HepG2 (cell line): ENCODE measurements at regions of chr7 and their contacts with region 1.

Region 1: DNA sequence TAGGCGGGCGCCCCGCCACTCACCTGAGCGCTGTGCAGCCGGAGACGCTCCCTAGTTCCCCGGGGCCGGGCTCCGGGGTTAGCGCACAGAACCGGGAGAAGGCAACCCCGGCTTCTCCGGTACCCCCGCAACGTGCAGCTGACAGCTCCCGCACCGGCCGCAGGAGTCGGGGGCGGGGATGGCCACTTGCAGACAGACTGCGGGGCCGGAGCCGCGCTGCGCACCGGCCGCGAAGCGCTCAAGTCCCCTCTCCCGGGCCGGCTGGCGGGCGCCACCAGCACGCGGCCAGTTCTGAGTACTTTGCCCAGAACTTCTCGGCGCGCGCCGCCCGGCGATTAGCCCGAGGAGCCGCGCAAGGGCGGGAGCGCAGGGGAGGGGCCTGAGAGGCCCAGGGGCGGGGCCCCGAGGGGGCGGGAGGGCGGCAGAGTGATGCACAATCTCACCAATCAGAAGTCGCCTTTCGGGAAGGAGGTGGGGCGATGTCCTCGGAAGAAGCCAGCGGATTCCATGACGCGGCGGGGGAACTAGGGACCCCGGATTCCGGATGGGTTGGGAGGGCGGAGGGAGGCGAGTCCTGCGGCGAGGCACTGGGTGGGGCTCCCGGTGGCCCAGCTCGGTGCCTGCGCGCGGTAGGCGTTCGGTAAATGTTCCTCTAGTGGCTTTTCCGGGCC is at the start of gene OSBPL3:
- DNase-seq: peak; percentile 91
- ATAC-seq: peak; percentile 84
- H3K4me3 ChIP-seq: peak within 1 kb of the TSS; percentile 78 to 89 (median 87)
- H3K27ac ChIP-seq: peak within 1 kb of the TSS; percentile 94
- H3K4me1 ChIP-seq: peaks cover 82% of the 10 kb centered on the region
- H3K27me3 ChIP-seq: no peaks in the 10 kb centered on the region; a peak in 1 of 5 replicates
- CTCF ChIP-seq: peak; percentile 46
- EP300 ChIP-seq: no peak
- POLR2A ChIP-seq: peak; percentile 72 to 81
- RAD21 ChIP-seq: no peak; the same call in 1 of the 2 replicates
- total RNA-seq, gene OSBPL3: 26.4 and 28.9 TPM in 2 replicates

Region 2: DNA sequence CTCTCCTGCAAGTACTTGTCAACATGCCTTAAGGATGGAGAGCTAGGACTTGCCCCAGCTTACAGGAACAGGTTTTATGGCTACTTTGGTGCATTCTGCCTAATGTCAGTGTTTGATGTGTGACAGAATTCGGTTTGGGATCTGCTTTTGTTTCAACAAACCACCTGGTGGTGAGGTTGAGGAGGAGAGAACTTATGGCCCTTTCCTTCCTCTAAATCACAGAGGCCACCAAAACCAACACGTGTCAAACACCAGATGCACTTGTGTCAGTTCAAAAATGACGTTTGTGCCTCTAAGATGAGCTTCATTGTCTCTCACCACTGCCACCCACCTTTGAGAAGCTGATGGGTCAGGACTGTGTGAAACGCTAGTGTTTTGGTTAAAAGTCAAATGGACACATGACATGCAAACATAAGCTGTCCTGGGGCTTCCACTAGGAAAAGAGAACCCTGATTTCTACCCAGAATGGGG is 83.9 kb before region 1 on chr7:
- CTCF ChIA-PET with region 1: interaction called, 8 read pairs
- POLR2A ChIA-PET with region 1: interaction called, 4 read pairs
- in situ Hi-C with region 1: no loop called
- intact Hi-C with region 1: loop called (anchors 2 kb)
- DNase-seq: no peak
- ATAC-seq: no peak
- H3K4me3 ChIP-seq: no peak overlapping the region
- H3K27ac ChIP-seq: no peak overlapping the region
- H3K4me1 ChIP-seq: peaks cover 8% of the 10 kb centered on the region
- H3K27me3 ChIP-seq: no peaks in the 10 kb centered on the region
- CTCF ChIP-seq: no peak
- EP300 ChIP-seq: no peak
- POLR2A ChIP-seq: no peak
- RAD21 ChIP-seq: no peak

Region 3: GRCh38 chr7:25028370-25029021 is 48.5 kb after region 1 on chr7:
- CTCF ChIA-PET with region 1: no interaction called
- POLR2A ChIA-PET with region 1: interaction called, 5 read pairs
- in situ Hi-C with region 1: no loop called
- intact Hi-C with region 1: loop called (anchors 2 kb)
- DNase-seq: peak; percentile 76
- ATAC-seq: no peak
- H3K4me3 ChIP-seq: no peak overlapping the region; a peak in 1 of 6 replicates
- H3K27ac ChIP-seq: peak overlapping the region; percentile 14
- H3K4me1 ChIP-seq: peaks cover 86% of the 10 kb centered on the region
- H3K27me3 ChIP-seq: no peaks in the 10 kb centered on the region
- CTCF ChIP-seq: no peak
- EP300 ChIP-seq: peak in 1 of 2 experiments; percentile 46; a peak in 1 of 4 replicates
- POLR2A ChIP-seq: no peak
- RAD21 ChIP-seq: no peak

Region 4: GRCh38 chr7:25134358-25135010 is 154.5 kb after region 1 on chr7:
- CTCF ChIA-PET with region 1: no interaction called
- POLR2A ChIA-PET with region 1: no interaction called
- in situ Hi-C with region 1: no loop called
- intact Hi-C with region 1: no loop called
- DNase-seq: no peak
- ATAC-seq: no peak
- H3K4me3 ChIP-seq: no peak overlapping the region
- H3K27ac ChIP-seq: no peak overlapping the region
- H3K4me1 ChIP-seq: peaks cover 28% of the 10 kb centered on the region
- H3K27me3 ChIP-seq: no peaks in the 10 kb centered on the region
- CTCF ChIP-seq: no peak
- EP300 ChIP-seq: no peak
- POLR2A ChIP-seq: no peak
- RAD21 ChIP-seq: no peak